MCF 10A (cell line): ENCODE measurements at regions of chr4 and their contacts with region 1.

Region 1: DNA sequence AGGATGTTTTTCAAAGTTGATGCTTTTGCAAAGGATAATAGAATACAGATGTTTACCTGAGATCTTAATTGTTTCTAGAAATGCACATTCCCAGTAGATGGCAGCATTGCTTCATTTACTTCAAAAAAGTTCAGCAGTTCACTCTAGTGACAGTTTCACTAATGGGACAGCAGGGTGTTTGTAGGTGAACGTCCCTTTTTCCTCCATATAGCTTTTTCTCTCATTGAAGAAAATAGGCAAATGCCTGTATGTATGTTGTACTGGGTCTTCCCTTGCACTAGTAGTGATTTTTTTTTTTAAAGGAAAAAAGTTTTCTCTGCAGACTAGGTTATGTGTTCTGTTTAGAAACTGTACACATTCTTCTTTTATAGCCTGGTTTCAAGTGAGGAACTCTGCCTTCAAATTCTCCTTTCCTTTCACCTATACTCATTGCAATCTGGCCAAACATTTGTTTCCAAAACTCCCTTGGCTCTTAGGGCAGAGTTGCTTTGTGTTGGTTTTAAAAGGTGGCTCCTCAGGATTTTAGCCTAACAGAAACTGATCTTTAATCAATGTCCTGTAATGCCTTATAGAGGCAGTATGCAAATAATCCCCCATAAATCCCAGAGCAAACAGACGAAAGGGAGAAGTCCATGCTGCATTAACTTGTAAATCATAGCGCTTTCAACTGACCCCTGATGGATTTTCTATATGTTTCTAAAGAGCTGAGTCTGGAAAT is 86.3 kb downstream of the EGF start:
- DNase-seq: peak; percentile 75
- H3K4me3 Mint-ChIP-seq: no peak overlapping the region
- H3K27ac Mint-ChIP-seq: no peak overlapping the region
- H3K4me1 Mint-ChIP-seq: no peaks in the 10 kb centered on the region
- H3K27me3 Mint-ChIP-seq: no peaks in the 10 kb centered on the region
- CTCF ChIP-seq: peak; percentile 74

Region 2: DNA sequence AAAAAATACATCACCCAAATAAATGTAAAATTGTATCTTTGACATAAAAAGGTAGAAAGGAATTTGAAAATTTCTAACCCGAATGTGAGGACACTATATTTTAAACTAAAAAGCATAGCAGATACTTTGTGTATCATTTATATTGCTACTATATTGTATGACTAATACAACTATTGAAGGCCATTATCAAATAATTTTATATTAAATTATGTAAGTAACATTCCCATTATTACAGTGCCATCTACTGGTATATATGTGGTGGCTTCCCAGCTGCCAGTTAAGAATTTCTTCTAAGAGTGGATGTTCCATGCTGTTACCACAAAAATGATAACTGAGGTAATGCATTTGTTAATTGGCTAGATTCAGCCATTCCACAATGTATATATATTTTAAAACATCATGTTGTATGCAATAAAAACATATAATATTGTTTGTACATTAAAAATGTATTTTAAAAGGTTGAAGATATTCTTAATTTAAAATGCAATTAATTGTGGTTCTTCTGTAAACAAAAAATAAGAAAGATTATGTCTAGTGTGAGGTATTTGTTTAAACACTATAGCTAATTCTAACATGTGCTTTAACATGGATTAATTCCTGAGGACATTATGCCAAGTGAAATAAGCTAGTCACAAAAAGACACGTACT is 21.0 kb before region 1 on chr4:
- CTCF ChIA-PET with region 1: interaction called, 12 read pairs
- POLR2A ChIA-PET with region 1: no interaction called
- intact Hi-C with region 1: no loop called
- DNase-seq: peak; percentile 47
- H3K4me3 Mint-ChIP-seq: no peak overlapping the region
- H3K27ac Mint-ChIP-seq: no peak overlapping the region
- H3K4me1 Mint-ChIP-seq: no peaks in the 10 kb centered on the region
- H3K27me3 Mint-ChIP-seq: no peaks in the 10 kb centered on the region
- CTCF ChIP-seq: peak; percentile 60

Region 3: DNA sequence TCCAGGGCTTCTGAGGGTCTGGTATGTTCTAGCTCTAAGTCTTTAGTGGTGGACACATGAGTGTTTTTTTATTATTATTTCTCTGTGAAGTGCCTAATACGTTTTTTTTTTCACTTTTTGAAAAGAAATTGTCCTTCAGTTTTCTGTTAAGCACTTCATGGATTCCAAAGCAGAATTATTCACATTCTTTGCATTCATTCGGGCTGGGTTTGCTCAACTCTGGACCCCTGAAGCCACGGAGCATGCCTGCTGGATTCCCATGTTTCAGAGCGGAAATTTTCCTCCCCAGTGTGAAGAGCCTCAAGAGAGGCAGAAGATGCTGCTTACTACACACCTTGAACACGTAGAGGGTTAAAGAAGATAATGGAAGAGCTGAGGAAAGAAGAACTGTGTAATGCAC is 21.1 kb after region 1 on chr4:
- CTCF ChIA-PET with region 1: interaction called, 12 read pairs
- POLR2A ChIA-PET with region 1: no interaction called
- intact Hi-C with region 1: no loop called
- DNase-seq: no peak
- H3K4me3 Mint-ChIP-seq: no peak overlapping the region
- H3K27ac Mint-ChIP-seq: no peak overlapping the region
- H3K4me1 Mint-ChIP-seq: peaks cover 7% of the 10 kb centered on the region
- H3K27me3 Mint-ChIP-seq: no peaks in the 10 kb centered on the region
- CTCF ChIP-seq: no peak

Region 4: DNA sequence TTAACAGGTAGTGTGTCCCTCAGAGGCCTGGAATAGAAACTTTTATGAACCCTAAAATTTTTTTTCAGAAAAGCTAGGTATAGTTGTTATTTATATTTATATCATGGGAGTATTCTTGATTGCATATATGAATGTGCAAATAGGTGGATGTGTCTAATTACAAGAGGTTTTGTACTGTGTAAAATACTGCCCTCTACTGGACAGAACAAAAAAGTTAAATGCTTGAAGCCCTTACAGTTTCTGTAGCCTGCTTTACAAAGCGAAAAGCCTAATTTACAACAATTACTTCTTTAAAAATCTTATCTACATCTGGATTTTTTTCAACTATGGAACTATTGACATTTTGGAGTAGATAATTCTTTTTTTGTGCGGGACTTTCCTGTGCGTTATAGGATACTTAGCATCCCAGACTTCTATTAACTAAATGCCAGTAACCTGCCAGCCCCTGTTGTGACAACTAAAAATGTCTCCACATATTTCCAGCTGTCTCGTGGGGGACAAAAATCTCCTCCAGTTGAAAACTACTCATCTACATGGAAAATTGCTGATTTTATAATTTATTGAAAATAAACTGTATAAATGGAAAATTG is 512.0 kb after region 1 on chr4:
- CTCF ChIA-PET with region 1: interaction called, 744 read pairs
- POLR2A ChIA-PET with region 1: interaction called, 4 read pairs
- intact Hi-C with region 1: loop called (anchors 1 kb)
- DNase-seq: peak; percentile 68
- H3K4me3 Mint-ChIP-seq: no peak overlapping the region
- H3K27ac Mint-ChIP-seq: no peak overlapping the region
- H3K4me1 Mint-ChIP-seq: no peaks in the 10 kb centered on the region
- H3K27me3 Mint-ChIP-seq: no peaks in the 10 kb centered on the region
- CTCF ChIP-seq: peak; percentile 84

Region 5: GRCh38 chr4:110586131-110586850 is 587.3 kb after region 1 on chr4:
- CTCF ChIA-PET with region 1: interaction called, 16 read pairs
- POLR2A ChIA-PET with region 1: no interaction called
- intact Hi-C with region 1: loop called (anchors 5 kb)
- DNase-seq: peak; percentile 68
- H3K4me3 Mint-ChIP-seq: peak overlapping the region; percentile 63
- H3K27ac Mint-ChIP-seq: peak overlapping the region; percentile 13
- H3K4me1 Mint-ChIP-seq: no peaks in the 10 kb centered on the region
- H3K27me3 Mint-ChIP-seq: no peaks in the 10 kb centered on the region
- CTCF ChIP-seq: peak; percentile 60

Region 6: DNA sequence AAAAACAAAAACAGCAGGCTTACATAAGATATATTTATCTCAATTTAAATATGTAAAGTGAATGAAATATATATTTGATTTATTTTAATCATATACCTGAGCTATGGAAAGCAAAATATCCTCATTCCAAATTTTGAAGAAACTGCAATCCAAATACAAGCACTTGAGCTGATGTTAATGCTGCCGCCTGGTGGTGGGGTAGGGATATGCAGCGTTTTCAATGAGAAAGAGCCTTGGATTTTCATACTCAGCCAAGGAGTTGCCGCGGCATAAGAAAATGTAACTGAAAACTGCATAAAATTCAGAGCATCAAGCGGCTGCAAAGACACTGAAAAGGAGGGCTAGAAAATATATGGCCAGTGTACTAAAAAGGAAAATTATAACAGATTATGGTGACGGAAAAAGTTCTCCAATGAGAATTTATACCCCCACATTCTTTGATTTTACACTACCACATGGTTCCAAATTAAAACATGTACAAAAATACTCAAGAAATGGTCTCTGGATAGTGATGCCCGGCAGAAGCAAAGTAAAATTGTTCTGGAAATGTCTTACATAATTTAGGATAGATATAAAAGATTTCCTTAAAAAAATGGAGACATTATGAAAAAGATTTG is 1284.1 kb after region 1 on chr4:
- CTCF ChIA-PET with region 1: no interaction called
- POLR2A ChIA-PET with region 1: no interaction called
- intact Hi-C with region 1: loop called (anchors 5 kb)
- DNase-seq: peak; percentile 77
- H3K4me3 Mint-ChIP-seq: no peak overlapping the region
- H3K27ac Mint-ChIP-seq: no peak overlapping the region
- H3K4me1 Mint-ChIP-seq: no peaks in the 10 kb centered on the region
- H3K27me3 Mint-ChIP-seq: peaks cover 48% of the 10 kb centered on the region
- CTCF ChIP-seq: peak; percentile 81